Head of caudate nucleus (tissue), 42 donors: ENCODE measurements at regions of chr1 and their contacts with region 1.

Region 1: GRCh38 chr1:205355054-205355453 is 1.7 kb downstream of the KLHDC8A start:
- DNase-seq: peak in 16 of 42 donors; percentile 13 to 69 (median 47)

Region 2: GRCh38 chr1:205211169-205211838 is 143.8 kb before region 1 on chr1 and contains the start of gene DSTYK:
- intact Hi-C with region 1: no loop called
- DNase-seq: peak; percentile 89 to 99 (median 96)

Region 3: DNA sequence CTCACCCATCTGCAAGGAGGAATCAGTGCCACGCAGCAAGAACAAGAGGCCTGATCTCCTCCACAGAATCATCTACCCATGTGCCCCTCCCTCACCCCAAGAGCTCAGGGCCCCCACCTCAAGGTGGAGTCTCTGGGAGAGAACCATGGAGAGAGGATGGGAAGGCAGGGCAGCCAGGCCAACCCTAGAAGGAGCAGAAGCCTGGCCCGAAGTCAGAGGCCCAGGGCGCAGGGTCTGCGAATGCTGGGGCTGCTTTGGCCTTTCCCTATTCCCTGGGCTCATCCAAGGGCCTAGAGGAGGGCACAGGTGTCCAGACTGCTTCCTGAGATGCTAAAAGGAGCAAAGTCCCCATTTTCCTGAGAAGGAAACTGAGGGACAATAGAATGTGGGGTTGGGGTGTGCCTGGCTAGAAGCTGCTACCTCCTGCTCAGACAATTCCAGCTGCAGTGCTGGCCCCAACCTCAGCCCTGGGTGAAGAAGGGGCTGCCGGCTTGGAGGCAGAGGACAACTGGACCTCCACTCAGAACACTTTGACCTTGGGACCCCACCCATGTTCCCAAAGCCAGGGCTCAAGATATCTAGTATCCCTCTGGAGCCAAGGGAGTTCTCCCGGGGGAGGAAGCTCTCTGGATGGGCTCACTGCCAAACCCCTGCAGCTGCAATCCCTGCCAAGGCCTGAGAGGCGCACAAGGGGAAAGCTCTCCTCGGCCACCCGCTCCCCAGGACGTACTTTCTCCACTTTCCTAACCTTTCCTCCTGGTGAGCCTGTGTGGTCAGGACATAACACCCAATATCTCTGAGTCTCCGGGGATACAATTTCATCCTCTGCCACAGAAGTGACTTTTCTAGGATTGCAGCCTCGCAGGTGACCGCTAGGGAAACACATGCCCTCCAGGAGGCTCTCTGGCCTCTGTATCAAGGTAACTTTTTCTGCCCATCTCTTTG is 83.4 kb after region 1 on chr1:
- intact Hi-C with region 1: loop called (anchors 5 kb)
- DNase-seq: peak; percentile 65 to 92 (median 79)